Ascending aorta (tissue), 2 donors: ENCODE measurements at regions of chr5 and their contacts with region 1.

Region 1: GRCh38 chr5:112419986-112420864 is 1.1 kb upstream of the EPB41L4A start:
- DNase-seq: peak; percentile 22 to 88
- H3K4me3 ChIP-seq: peak overlapping the region; percentile 82
- H3K27ac ChIP-seq: peak overlapping the region; percentile 77 to 84
- H3K4me1 ChIP-seq: peaks cover 0 to 2% of the 10 kb centered on the region in 2 donors
- H3K27me3 ChIP-seq: no peaks in the 10 kb centered on the region
- CTCF ChIP-seq: peak; percentile 84 to 93 (median 85)

Region 2: GRCh38 chr5:112174959-112175594 is 245.1 kb before region 1 on chr5:
- intact Hi-C with region 1: loop called (anchors 2 kb)
- DNase-seq: no peak
- H3K4me3 ChIP-seq: no peak overlapping the region
- H3K27ac ChIP-seq: no peak overlapping the region
- H3K4me1 ChIP-seq: no peaks in the 10 kb centered on the region
- H3K27me3 ChIP-seq: no peaks in the 10 kb centered on the region
- CTCF ChIP-seq: peak in 2 of 3 experiments; percentile 37 to 63

Region 3: GRCh38 chr5:112210430-112211005 is 209.7 kb before region 1 on chr5:
- intact Hi-C with region 1: loop called (anchors 1 kb)
- DNase-seq: no peak
- H3K4me3 ChIP-seq: no peak overlapping the region
- H3K27ac ChIP-seq: no peak overlapping the region
- H3K4me1 ChIP-seq: no peaks in the 10 kb centered on the region
- H3K27me3 ChIP-seq: no peaks in the 10 kb centered on the region
- CTCF ChIP-seq: peak; percentile 35 to 63 (median 42)

Region 4: DNA sequence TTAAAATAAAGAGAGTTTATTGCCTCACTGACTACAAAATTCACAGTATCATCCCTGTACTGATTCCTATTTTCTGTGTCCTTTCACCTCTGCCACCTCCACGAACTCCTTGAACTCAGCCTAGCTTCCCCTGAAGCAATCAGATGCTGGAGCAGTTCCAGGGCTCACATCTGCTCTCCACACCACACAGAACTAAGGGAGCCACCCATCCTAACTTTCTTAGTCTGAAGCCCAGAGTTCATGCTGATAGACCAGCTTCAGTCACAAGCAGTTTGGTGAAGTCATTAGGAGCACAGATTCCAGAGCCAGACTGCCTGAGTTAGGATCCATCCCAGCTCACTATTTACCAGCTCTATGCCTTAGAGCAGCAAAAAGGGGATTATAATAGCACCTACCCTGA is 14.4 kb after region 1 on chr5:
- intact Hi-C with region 1: no loop called
- DNase-seq: no peak
- H3K4me3 ChIP-seq: no peak overlapping the region
- H3K27ac ChIP-seq: no peak overlapping the region
- H3K4me1 ChIP-seq: no peaks in the 10 kb centered on the region
- H3K27me3 ChIP-seq: no peaks in the 10 kb centered on the region
- CTCF ChIP-seq: no peak

Region 5: DNA sequence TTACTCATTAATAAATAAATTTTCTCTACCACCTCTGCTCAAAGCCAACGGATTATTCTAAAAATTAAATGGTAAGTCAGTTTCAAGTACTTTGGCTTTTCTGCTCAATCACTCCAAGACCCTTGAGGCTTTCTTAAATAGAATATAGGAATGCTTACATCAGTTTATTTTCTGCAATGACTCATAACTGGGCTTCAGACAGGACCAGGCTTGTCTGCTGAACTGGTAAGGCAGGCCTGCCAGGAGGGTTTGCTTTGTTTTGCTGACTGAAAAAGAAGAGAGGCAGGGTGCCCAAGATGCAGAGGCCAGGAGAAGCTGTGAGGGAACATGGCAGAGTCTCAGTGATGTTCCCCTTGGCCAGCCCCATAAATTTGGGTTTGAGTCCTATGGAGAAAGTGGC is 59.2 kb after region 1 on chr5:
- intact Hi-C with region 1: no loop called
- DNase-seq: no peak
- H3K4me3 ChIP-seq: no peak overlapping the region
- H3K27ac ChIP-seq: no peak overlapping the region
- H3K4me1 ChIP-seq: no peaks in the 10 kb centered on the region
- H3K27me3 ChIP-seq: no peaks in the 10 kb centered on the region
- CTCF ChIP-seq: no peak